ENCODE measurements at regions of chr17 and their contacts with region 1.

Region 1: DNA sequence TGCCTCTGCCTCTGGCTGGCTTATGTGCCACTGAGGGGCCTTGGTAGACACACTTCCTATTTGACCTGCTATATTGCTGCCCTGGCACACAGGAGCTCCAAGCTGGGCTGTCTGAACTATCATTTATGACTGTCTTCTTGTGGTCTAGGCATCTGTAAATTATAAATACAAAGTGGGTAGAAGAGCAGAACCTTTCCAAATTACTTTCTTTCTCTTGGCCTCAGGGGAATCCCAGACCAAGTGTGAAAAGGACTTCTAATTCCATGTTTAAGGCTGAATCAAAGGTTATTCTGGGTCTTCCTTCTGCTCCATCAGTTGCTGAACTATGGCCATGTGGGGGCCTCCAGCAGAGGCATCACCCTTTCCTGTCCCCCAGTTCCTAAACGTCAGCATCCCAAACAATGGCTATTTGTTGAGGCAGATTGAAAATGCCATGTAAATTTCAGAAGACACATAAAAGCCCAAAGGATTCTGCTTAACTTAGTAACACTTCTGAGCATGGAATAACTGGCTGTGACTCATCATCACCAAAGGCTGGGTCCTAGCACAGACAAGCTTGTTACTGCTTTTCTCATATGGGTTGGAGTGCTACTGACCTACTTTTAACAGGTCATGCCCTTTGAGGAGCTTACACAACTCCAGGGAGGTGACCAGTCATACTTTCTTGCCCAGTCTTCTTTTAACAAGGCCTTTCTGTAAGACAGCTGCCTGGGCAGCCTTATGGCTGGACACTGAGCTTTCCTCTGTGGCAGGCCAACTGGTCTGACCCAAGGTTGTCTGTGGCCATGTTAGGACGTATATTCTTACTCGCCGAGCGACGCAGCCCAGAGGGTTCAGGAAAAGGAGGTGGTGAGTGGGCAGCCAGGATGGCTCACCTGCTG is 154.8 kb downstream of the VPS53 start:
- DNase-seq: peak; percentile 86 to 95 (median 89)
- H3K4me3 ChIP-seq: peak overlapping the region in 1 of 3 experiments; percentile 37
- H3K4me3 Mint-ChIP-seq: peak overlapping the region; percentile 54 to 81
- H3K27ac ChIP-seq: peak overlapping the region; percentile 73 to 89
- H3K27ac Mint-ChIP-seq: peak overlapping the region; percentile 90 to 99 (median 98)
- H3K4me1 ChIP-seq: peaks cover 37 to 43% of the 10 kb centered on the region in 2 donors
- H3K4me1 Mint-ChIP-seq: peaks cover 50% of the 10 kb centered on the region
- H3K27me3 ChIP-seq: no peaks in the 10 kb centered on the region
- H3K27me3 Mint-ChIP-seq: peaks cover 0 to 5% (median 0%) of the 10 kb centered on the region in 3 donors
- CTCF ChIP-seq: no peak

Region 2: GRCh38 chr17:520447-521182 is 39.2 kb before region 1 on chr17:
- intact Hi-C with region 1: loop called in 1 of 2 experiments (anchors 5 kb)
- DNase-seq: peak in 2 of 3 donors; percentile 24 to 54
- H3K4me3 ChIP-seq: no peak overlapping the region
- H3K4me3 Mint-ChIP-seq: peak overlapping the region in 1 of 2 donors; percentile 63
- H3K27ac ChIP-seq: peak overlapping the region in 1 of 2 donors; percentile 63
- H3K27ac Mint-ChIP-seq: peak overlapping the region in 6 of 7 donors; percentile 54 to 91 (median 86)
- H3K4me1 ChIP-seq: peaks cover 42 to 57% of the 10 kb centered on the region in 2 donors
- H3K4me1 Mint-ChIP-seq: peaks cover 45% of the 10 kb centered on the region
- H3K27me3 ChIP-seq: no peaks in the 10 kb centered on the region
- H3K27me3 Mint-ChIP-seq: no peaks in the 10 kb centered on the region
- CTCF ChIP-seq: no peak

Region 3: GRCh38 chr17:534071-534691 is 25.6 kb before region 1 on chr17:
- intact Hi-C with region 1: loop called in 1 of 2 experiments (anchors 2 kb)
- DNase-seq: peak; percentile 90 to 95 (median 93)
- H3K4me3 ChIP-seq: peak overlapping the region in 1 of 3 experiments; percentile 29
- H3K4me3 Mint-ChIP-seq: peak overlapping the region; percentile 34 to 79
- H3K27ac ChIP-seq: peak overlapping the region; percentile 72 to 85
- H3K27ac Mint-ChIP-seq: peak overlapping the region; percentile 90 to 97 (median 94)
- H3K4me1 ChIP-seq: peaks cover 74 to 79% of the 10 kb centered on the region in 2 donors
- H3K4me1 Mint-ChIP-seq: peaks cover 79% of the 10 kb centered on the region
- H3K27me3 ChIP-seq: no peaks in the 10 kb centered on the region
- H3K27me3 Mint-ChIP-seq: no peaks in the 10 kb centered on the region
- CTCF ChIP-seq: no peak

Region 4: GRCh38 chr17:614653-615473 is 55.1 kb after region 1 on chr17:
- intact Hi-C with region 1: loop called in 1 of 2 experiments (anchors 2 kb)
- DNase-seq: peak; percentile 78 to 92 (median 87)
- H3K4me3 ChIP-seq: peak overlapping the region in 2 of 3 experiments; percentile 17 to 66
- H3K4me3 Mint-ChIP-seq: peak overlapping the region; percentile 62 to 67
- H3K27ac ChIP-seq: peak overlapping the region; percentile 87 to 94
- H3K27ac Mint-ChIP-seq: peak overlapping the region; percentile 96 to 100 (median 97)
- H3K4me1 ChIP-seq: peaks cover 48 to 60% of the 10 kb centered on the region in 2 donors
- H3K4me1 Mint-ChIP-seq: peaks cover 47% of the 10 kb centered on the region
- H3K27me3 ChIP-seq: no peaks in the 10 kb centered on the region
- H3K27me3 Mint-ChIP-seq: peaks cover 0 to 1% (median 0%) of the 10 kb centered on the region in 3 donors
- CTCF ChIP-seq: no peak

Region 5: GRCh38 chr17:628089-628941 is 68.5 kb after region 1 on chr17:
- intact Hi-C with region 1: no loop called
- DNase-seq: peak in 2 of 3 donors; percentile 39 to 64
- H3K4me3 ChIP-seq: peak overlapping the region; percentile 18 to 61 (median 49)
- H3K4me3 Mint-ChIP-seq: peak overlapping the region; percentile 73 to 95
- H3K27ac ChIP-seq: peak overlapping the region; percentile 78 to 85
- H3K27ac Mint-ChIP-seq: peak overlapping the region; percentile 94 to 99 (median 97)
- H3K4me1 ChIP-seq: peaks cover 62 to 63% of the 10 kb centered on the region in 2 donors
- H3K4me1 Mint-ChIP-seq: peaks cover 69% of the 10 kb centered on the region
- H3K27me3 ChIP-seq: no peaks in the 10 kb centered on the region
- H3K27me3 Mint-ChIP-seq: peaks cover 0 to 2% (median 0%) of the 10 kb centered on the region in 3 donors
- CTCF ChIP-seq: no peak

Region 6: GRCh38 chr17:676060-676700 is 116.4 kb after region 1 on chr17:
- intact Hi-C with region 1: loop called in 1 of 2 experiments (anchors 10 kb)
- DNase-seq: no peak
- H3K4me3 ChIP-seq: no peak overlapping the region
- H3K4me3 Mint-ChIP-seq: no peak overlapping the region
- H3K27ac ChIP-seq: no peak overlapping the region
- H3K27ac Mint-ChIP-seq: no peak overlapping the region
- H3K4me1 ChIP-seq: peaks cover 0 to 8% of the 10 kb centered on the region in 2 donors
- H3K4me1 Mint-ChIP-seq: peaks cover 7% of the 10 kb centered on the region
- H3K27me3 ChIP-seq: no peaks in the 10 kb centered on the region
- H3K27me3 Mint-ChIP-seq: no peaks in the 10 kb centered on the region
- CTCF ChIP-seq: no peak

Region 7: GRCh38 chr17:693791-694638 is 134.2 kb after region 1 on chr17:
- intact Hi-C with region 1: loop called in 1 of 2 experiments (anchors 10 kb)
- DNase-seq: no peak
- H3K4me3 ChIP-seq: no peak overlapping the region
- H3K4me3 Mint-ChIP-seq: no peak overlapping the region
- H3K27ac ChIP-seq: no peak overlapping the region
- H3K27ac Mint-ChIP-seq: no peak overlapping the region
- H3K4me1 ChIP-seq: peaks cover 13 to 17% of the 10 kb centered on the region in 2 donors
- H3K4me1 Mint-ChIP-seq: peaks cover 18% of the 10 kb centered on the region
- H3K27me3 ChIP-seq: no peaks in the 10 kb centered on the region
- H3K27me3 Mint-ChIP-seq: no peaks in the 10 kb centered on the region
- CTCF ChIP-seq: no peak